ENCODE measurements at regions of chr3 and their contacts with region 1.

Region 1: DNA sequence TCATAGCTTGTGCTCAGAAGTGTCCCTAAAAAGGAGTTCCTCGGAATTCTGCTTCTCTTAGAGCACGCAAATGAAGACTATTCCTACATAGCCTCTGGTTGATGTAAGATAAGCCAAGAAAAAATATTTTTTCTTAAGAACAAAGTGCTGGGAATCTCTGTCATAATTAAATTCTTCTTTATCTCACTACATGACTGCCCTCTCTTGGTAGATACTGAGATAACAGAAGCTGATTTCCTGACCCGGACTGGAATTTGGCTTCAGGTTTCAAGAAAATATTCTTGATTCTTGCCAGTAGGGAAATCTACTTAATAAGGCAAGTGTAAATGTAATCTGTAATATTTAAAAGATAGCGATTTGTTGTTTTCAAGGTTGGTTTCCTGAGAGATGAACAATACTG is 31.3 kb upstream of the SETMAR start:
- DNase-seq: peak; percentile 56 to 74 (median 65)
- H3K4me3 ChIP-seq: peak overlapping the region in 1 of 7 experiments; percentile 36
- H3K27ac ChIP-seq: no peak overlapping the region
- H3K4me1 ChIP-seq: peaks cover 15 to 24% (median 19%) of the 10 kb centered on the region in 4 experiments
- H3K27me3 ChIP-seq: no peaks in the 10 kb centered on the region

Region 2: GRCh38 chr3:4284865-4285264 is 13.0 kb after region 1 on chr3:
- CTCF ChIA-PET with region 1: interaction called, 10 read pairs
- POLR2A ChIA-PET with region 1: no interaction called
- DNase-seq: no peak
- H3K4me3 ChIP-seq: no peak overlapping the region
- H3K27ac ChIP-seq: no peak overlapping the region
- H3K4me1 ChIP-seq: peaks cover 0 to 6% (median 3%) of the 10 kb centered on the region in 4 experiments
- H3K27me3 ChIP-seq: no peaks in the 10 kb centered on the region

Region 3: DNA sequence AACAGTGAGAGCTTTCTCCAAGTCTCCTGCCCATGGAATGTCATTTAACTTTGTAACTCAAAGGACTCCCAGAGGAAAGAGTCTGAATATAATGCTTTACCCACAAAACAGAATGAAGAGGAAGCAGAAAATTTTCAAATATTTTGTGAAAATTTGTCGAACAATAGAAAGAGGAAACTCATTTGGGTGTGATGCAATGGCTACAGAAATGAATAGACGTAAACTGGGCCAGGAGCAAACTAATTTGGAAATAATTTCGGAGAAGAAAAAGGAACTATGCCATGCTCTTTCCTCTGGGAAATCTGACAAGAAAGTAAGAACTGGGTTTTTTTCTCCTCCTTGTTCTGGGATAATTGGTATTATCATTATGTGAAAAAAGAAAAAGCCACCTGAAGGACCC is 206.4 kb after region 1 on chr3:
- CTCF ChIA-PET with region 1: no interaction called
- POLR2A ChIA-PET with region 1: no interaction called
- DNase-seq: peak in 2 of 3 donors; percentile 34 to 52
- H3K4me3 ChIP-seq: no peak overlapping the region
- H3K27ac ChIP-seq: no peak overlapping the region
- H3K4me1 ChIP-seq: peaks cover 2 to 49% (median 15%) of the 10 kb centered on the region in 4 experiments
- H3K27me3 ChIP-seq: no peaks in the 10 kb centered on the region